PC-9 (cell line): ENCODE measurements at regions of chr18 and their contacts with region 1.

Region 1: GRCh38 chr18:2223849-2224248 is 347.5 kb downstream of the METTL4 start:
- DNase-seq: peak in 1 of 2 experiments; percentile 34
- H3K4me3 ChIP-seq: no peak overlapping the region
- H3K27ac ChIP-seq: peak overlapping the region; percentile 49; the same call in 1 of the 2 replicates
- H3K4me1 ChIP-seq: peaks cover 14% of the 10 kb centered on the region
- H3K27me3 ChIP-seq: no peaks in the 10 kb centered on the region
- CTCF ChIP-seq: peak; percentile 60

Region 2: GRCh38 chr18:864872-865273 is 1359.0 kb before region 1 on chr18:
- CTCF ChIA-PET with region 1: interaction called, 3 read pairs
- POLR2A ChIA-PET with region 1: no interaction called
- intact Hi-C with region 1: loop called (anchors 5 kb)
- DNase-seq: peak; percentile 52 to 68
- H3K4me3 ChIP-seq: no peak overlapping the region
- H3K27ac ChIP-seq: no peak overlapping the region
- H3K4me1 ChIP-seq: no peaks in the 10 kb centered on the region
- H3K27me3 ChIP-seq: no peaks in the 10 kb centered on the region
- CTCF ChIP-seq: peak; percentile 96

Region 3: DNA sequence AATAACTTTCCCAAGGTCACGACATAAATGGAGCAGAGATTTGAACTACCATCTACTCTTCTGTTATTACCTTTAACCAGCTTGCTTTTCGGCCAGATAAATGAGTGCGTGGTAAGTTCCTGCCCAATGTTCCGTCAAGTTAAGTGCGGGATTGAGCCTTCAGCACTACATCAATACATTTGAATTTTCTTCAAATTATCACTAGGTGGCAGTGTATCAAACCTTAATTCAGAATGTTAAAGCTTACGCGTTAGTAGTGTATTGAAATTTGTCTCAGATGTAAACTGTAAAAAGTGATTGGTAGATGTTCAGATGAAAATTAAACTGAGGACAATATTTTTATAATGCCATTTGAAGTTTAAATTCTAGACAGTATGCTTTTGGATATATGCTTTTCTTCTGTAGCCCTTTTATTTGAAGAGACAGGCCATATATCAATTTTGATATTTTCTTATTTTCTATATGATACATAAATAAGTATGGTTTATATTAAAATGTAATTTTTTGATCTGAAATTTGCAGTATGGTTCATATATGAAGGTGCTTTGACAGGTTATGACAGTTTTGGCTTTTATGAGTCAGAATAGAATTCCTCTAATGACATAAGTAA is 637.9 kb before region 1 on chr18:
- CTCF ChIA-PET with region 1: no interaction called
- POLR2A ChIA-PET with region 1: no interaction called
- intact Hi-C with region 1: loop called (anchors 5 kb)
- DNase-seq: peak in 1 of 2 experiments; percentile 41
- H3K4me3 ChIP-seq: no peak overlapping the region
- H3K27ac ChIP-seq: no peak overlapping the region
- H3K4me1 ChIP-seq: no peaks in the 10 kb centered on the region
- H3K27me3 ChIP-seq: no peaks in the 10 kb centered on the region
- CTCF ChIP-seq: peak; percentile 70

Region 4: GRCh38 chr18:2104620-2105462 is 119.0 kb before region 1 on chr18:
- CTCF ChIA-PET with region 1: interaction called, 8 read pairs
- POLR2A ChIA-PET with region 1: no interaction called
- intact Hi-C with region 1: loop called (anchors 2 kb)
- DNase-seq: peak in 1 of 2 experiments; percentile 43
- H3K4me3 ChIP-seq: no peak overlapping the region
- H3K27ac ChIP-seq: no peak overlapping the region
- H3K4me1 ChIP-seq: no peaks in the 10 kb centered on the region
- H3K27me3 ChIP-seq: no peaks in the 10 kb centered on the region
- CTCF ChIP-seq: peak; percentile 81

Region 5: GRCh38 chr18:2173464-2173863 is 50.4 kb before region 1 on chr18:
- CTCF ChIA-PET with region 1: interaction called, 4 read pairs
- POLR2A ChIA-PET with region 1: no interaction called
- intact Hi-C with region 1: loop called (anchors 2 kb)
- DNase-seq: peak; percentile 53 to 73
- H3K4me3 ChIP-seq: no peak overlapping the region
- H3K27ac ChIP-seq: no peak overlapping the region
- H3K4me1 ChIP-seq: peaks cover 26% of the 10 kb centered on the region
- H3K27me3 ChIP-seq: no peaks in the 10 kb centered on the region
- CTCF ChIP-seq: no peak

Region 6: DNA sequence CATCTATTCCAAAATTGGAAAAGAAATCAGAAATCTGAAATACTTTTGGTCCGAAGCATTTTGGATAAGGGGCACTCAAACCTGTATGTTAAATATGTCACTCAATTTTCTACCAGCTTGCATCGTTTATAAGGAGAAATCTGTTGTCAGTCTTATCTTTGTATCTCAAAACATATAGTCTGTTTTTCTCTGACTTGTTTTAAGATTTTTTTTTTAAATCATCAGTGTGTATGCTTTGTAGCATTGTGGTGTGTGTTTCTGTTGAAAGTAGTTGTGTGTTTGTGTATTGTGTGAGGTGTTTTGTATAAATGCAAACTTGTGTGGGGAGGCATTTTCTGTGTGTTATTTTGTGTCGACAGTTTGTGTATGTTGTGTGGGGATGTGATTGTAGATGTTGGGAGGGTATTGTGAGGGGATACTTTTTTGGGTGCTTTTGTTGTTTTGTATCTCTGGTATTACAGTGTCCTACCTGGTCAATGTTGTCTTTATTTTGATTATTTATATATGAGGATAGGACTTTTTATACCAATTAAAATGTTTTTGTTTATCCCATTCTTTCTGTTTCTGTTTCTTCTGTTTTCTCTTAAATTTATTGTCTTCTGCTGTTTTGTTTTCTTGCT is 462.6 kb after region 1 on chr18:
- CTCF ChIA-PET with region 1: no interaction called
- POLR2A ChIA-PET with region 1: no interaction called
- intact Hi-C with region 1: no loop called
- DNase-seq: no peak
- H3K4me3 ChIP-seq: no peak overlapping the region
- H3K27ac ChIP-seq: no peak overlapping the region
- H3K4me1 ChIP-seq: no peaks in the 10 kb centered on the region
- H3K27me3 ChIP-seq: no peaks in the 10 kb centered on the region
- CTCF ChIP-seq: no peak